IMR-90 (cell line): ENCODE measurements at regions of chr1 and their contacts with region 1.

Region 1: GRCh38 chr1:35769759-35770446 is at the start of gene CLSPN:
- DNase-seq: peak; percentile 94
- ATAC-seq: peak; percentile 97
- H3K4me3 ChIP-seq: peak within 1 kb of the TSS; percentile 82
- H3K27ac ChIP-seq: peak within 1 kb of the TSS; percentile 88
- H3K4me1 ChIP-seq: peaks cover 2% of the 10 kb centered on the region
- H3K27me3 ChIP-seq: no peaks in the 10 kb centered on the region
- CTCF ChIP-seq: no peak
- POLR2A ChIP-seq: peak; percentile 81; the same call in 1 of the 2 replicates
- RAD21 ChIP-seq: no peak
- total RNA-seq, gene CLSPN: 14.3 and 14.4 TPM in 2 replicates

Region 2: GRCh38 chr1:35573198-35574090 is 196.5 kb before region 1 on chr1 and contains the start of gene TFAP2E:
- CTCF ChIA-PET with region 1: interaction called, 4 read pairs
- POLR2A ChIA-PET with region 1: no interaction called
- dilution Hi-C with region 1: no loop called
- in situ Hi-C with region 1: loop called (anchors 5 kb)
- intact Hi-C with region 1: loop called (anchors 1 kb)
- DNase-seq: no peak
- ATAC-seq: peak; percentile 68
- H3K4me3 ChIP-seq: peak within 1 kb of the TSS; percentile 48
- H3K27ac ChIP-seq: no peak within 1 kb of the TSS
- H3K4me1 ChIP-seq: peaks cover 1% of the 10 kb centered on the region; the same call in 1 of the 2 replicates
- H3K27me3 ChIP-seq: peaks cover 51% of the 10 kb centered on the region
- CTCF ChIP-seq: no peak
- POLR2A ChIP-seq: no peak
- RAD21 ChIP-seq: no peak
- total RNA-seq, gene TFAP2E: under 0.01 TPM in 2 replicates

Region 3: DNA sequence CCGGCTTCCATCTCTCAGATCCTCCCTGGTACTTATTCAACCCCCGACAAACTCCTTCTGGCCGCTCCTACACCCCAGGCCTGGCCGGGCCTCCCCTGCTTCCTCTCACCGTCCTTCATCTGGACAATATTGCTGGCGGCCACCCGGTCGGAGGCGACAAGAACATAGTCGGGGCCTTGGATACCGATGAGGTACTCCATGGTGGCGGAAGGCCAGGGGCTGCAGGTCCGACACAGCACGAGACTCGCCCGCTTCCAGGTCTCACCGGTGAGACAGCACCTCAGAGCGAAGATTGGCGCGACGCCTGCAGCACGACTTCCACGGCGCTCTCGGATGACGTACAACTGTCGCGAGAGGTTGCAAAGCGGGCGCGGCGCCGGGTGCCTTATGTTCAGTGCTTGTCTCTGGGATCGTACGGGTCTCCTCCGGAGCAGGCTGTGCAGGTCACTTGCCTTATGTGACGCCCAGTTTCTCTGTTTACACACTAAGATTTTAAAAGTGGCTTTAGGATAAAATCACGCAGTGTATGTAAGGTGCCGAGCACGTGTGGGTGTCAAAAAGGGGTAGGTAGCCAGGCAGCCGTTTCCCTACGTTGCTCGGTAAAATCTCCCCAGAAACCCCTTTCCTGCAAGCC is 128.6 kb before region 1 on chr1 and contains the start of gene PSMB2:
- CTCF ChIA-PET with region 1: no interaction called
- POLR2A ChIA-PET with region 1: no interaction called
- dilution Hi-C with region 1: no loop called
- in situ Hi-C with region 1: no loop called
- intact Hi-C with region 1: loop called (anchors 10 kb)
- DNase-seq: peak; percentile 94
- ATAC-seq: peak; percentile 94
- H3K4me3 ChIP-seq: peak within 1 kb of the TSS; percentile 90
- H3K27ac ChIP-seq: peak within 1 kb of the TSS; percentile 86
- H3K4me1 ChIP-seq: no peaks in the 10 kb centered on the region
- H3K27me3 ChIP-seq: peaks cover 11% of the 10 kb centered on the region
- CTCF ChIP-seq: no peak
- POLR2A ChIP-seq: peak; percentile 83
- RAD21 ChIP-seq: no peak
- total RNA-seq, gene PSMB2: 23.8 and 28.1 TPM in 2 replicates

Region 4: DNA sequence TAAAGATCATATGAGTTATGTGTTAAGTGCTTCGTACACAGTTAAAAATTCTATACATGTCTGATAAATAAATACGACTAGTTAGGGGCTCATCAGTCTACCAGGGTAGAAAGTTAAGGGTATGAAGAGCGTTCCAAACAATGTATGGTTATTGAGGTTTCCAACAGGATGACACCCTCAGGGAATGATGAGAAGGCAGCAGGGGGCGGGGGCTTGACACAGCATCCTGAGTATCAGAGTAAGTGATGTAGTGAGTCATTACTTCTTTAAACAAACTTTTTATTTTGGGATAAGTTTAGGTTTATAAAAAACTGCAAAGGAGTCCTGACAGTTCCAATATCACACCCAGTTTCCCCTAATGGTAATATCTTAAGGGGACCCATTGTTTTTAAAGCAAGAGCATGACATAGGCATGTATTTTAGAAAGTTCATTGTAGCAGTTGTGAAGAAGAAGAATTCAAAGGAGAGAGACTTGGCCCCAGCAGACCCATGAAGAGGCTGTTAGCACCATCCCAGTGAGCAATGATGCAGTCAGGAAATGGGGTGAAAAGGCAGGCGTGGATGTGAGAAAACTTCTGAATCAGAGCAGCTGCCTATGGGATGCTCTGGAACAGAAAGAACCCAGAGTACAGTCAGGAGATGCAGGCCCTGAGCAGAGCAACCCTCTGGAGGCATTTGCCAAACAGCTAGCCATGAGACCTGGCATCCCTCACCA is 113.6 kb before region 1 on chr1:
- CTCF ChIA-PET with region 1: no interaction called
- POLR2A ChIA-PET with region 1: no interaction called
- dilution Hi-C with region 1: no loop called
- in situ Hi-C with region 1: no loop called
- intact Hi-C with region 1: no loop called
- DNase-seq: peak; percentile 76
- ATAC-seq: peak; percentile 81
- H3K4me3 ChIP-seq: no peak overlapping the region
- H3K27ac ChIP-seq: no peak overlapping the region
- H3K4me1 ChIP-seq: peaks cover 3% of the 10 kb centered on the region; the same call in 1 of the 2 replicates
- H3K27me3 ChIP-seq: peaks cover 9% of the 10 kb centered on the region
- CTCF ChIP-seq: no peak
- POLR2A ChIP-seq: no peak
- RAD21 ChIP-seq: no peak

Region 5: DNA sequence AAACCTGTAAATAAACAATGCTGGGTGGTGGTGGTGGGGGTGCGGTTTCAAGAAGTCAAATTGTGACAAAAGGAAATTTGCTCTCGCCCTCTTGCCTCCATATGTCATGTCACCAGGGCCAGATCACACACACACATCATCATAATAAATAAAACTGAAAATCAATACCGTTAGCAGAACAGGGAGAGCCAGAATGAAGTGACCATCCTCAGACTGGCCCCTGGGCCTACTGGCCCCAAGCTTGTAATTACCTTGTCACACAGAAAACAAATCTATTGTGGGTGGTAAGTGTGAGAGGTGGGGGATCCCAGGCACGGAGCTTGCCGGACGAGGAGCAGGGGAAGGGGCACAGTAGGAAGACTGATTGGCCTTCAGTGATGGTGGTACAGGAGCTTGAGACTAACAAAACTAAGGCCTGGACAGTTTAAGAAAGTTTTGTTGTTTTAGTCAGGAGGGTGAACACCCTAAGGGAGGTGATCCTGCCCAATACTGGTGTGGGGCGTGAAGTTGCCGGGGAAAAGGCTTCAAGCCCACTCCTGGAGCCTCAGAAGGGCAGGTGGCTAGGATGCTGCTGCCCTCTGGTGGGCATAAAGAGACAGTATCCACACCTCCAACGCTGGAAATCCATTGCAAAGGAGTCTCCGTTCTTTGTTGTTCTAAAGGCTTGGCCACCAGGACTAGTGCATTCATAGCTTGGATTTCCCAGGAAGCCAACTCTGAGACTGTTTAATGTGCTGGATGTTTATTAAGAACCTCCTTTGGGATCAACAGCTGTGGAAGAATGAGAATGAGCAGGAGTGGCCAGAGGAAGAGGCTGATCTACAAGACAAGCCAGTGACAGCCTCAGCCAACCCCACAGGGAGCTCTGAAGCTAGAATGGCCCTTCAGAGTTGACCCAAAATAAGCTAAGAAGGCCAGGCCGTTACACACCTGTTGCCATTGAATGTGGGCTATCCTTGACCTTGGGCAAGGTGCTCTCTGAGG is 43.2 kb before region 1 on chr1:
- CTCF ChIA-PET with region 1: no interaction called
- POLR2A ChIA-PET with region 1: no interaction called
- dilution Hi-C with region 1: no loop called
- in situ Hi-C with region 1: no loop called
- intact Hi-C with region 1: loop called (anchors 5 kb)
- DNase-seq: peak; percentile 58
- ATAC-seq: peak; percentile 97
- H3K4me3 ChIP-seq: no peak overlapping the region
- H3K27ac ChIP-seq: no peak overlapping the region
- H3K4me1 ChIP-seq: no peaks in the 10 kb centered on the region
- H3K27me3 ChIP-seq: no peaks in the 10 kb centered on the region
- CTCF ChIP-seq: peak; percentile 85
- POLR2A ChIP-seq: no peak
- RAD21 ChIP-seq: peak; percentile 87

Region 6: DNA sequence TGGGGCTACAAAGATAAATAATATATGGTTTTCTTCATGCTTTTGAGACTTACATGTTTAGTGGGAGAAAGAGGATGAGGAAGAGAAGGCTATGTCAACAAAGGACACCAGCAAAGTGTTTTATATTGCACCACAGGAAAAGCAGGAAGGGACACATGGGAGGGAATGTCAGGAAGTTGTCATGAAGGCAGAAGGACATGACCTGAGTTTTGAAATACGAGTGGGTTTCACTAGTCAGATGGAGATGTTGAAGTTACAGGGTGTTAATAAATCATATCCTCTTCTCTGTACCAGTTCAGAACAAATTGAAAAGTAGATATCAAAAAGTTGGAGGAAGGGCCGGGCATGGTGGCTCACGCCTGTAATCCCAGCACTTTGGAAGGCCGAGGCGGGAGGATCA is 94.9 kb after region 1 on chr1:
- CTCF ChIA-PET with region 1: no interaction called
- POLR2A ChIA-PET with region 1: no interaction called
- dilution Hi-C with region 1: no loop called
- in situ Hi-C with region 1: no loop called
- intact Hi-C with region 1: no loop called
- DNase-seq: no peak
- ATAC-seq: no peak
- H3K4me3 ChIP-seq: no peak overlapping the region
- H3K27ac ChIP-seq: no peak overlapping the region
- H3K4me1 ChIP-seq: no peaks in the 10 kb centered on the region
- H3K27me3 ChIP-seq: no peaks in the 10 kb centered on the region
- CTCF ChIP-seq: no peak
- POLR2A ChIP-seq: no peak
- RAD21 ChIP-seq: no peak